Common myeloid progenitor, CD34-positive (primary cell): ENCODE measurements at regions of chr6 and their contacts with region 1.

Region 1: DNA sequence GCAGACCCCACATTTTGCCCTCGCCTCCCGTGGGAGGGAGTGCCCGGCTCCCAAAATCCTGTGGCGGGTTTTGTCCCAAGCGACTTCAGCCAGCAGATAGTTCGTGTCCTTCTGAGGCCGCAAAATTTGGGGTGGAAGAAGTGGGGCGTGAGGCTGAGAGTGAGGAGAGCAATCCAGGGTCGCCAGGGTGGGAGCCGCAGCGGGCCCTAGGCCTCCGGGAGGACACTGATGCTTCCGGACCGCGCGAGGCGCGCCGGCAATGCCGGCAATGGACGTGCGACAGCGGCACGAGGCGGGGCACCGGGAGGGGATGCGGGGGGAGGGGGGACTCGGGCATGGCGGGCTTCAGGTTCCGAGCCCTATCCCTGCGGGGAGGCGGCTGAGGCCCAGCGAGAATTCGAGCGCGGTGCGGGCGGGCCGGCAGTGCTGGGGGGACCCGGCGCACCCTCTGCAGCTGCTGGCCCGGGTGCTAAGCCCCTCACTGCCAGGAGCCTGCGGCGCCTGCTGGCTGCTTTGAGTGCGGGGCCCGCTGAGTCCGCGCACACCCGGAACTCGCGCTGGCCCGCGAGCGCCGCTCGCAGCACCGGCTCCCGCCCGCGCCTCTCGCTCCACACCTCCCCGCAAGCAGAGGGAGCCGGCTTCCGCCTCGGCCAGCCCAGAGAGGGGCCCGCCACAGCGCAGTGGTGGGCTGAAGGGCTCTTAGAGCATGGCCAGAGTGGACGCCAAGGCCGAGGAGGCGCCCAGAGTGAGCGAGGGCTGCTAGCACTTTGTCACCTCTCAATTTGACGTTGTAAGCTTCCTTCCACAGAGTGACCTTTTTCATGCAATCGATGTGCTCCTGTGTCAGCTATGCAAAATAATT is 143.8 kb downstream of the LPA start:
- DNase-seq: peak; percentile 45 to 77 (median 65)
- H3K4me3 ChIP-seq: peak overlapping the region; percentile 37 to 83 (median 65)
- H3K27ac ChIP-seq: no peak overlapping the region
- H3K4me1 ChIP-seq: peaks cover 0 to 12% (median 10%) of the 10 kb centered on the region in 4 experiments
- H3K27me3 ChIP-seq: peaks cover 0 to 26% (median 6%) of the 10 kb centered on the region in 5 experiments

Region 2: DNA sequence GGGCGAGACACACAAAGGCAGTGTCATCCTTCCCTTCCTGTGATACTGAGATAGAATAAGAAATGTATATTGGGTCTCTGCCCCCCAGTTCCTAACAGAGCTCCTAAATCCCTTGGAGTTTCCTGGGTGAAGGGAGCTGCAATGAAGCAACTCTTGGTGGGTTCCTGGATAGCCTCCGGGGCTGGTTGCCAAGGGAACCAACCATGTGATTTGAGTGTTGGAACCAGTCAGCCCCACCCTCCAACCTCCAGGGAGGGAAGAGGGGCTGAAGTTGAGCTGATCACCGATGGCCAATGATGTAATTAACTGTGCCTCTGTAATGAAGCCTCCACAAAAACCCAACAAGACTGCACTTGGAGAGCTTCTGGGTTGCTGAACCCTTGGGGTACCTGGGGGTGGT is 55.5 kb before region 1 on chr6:
- CTCF ChIA-PET with region 1: no interaction called
- POLR2A ChIA-PET with region 1: no interaction called
- DNase-seq: no peak
- H3K4me3 ChIP-seq: no peak overlapping the region
- H3K27ac ChIP-seq: no peak overlapping the region
- H3K4me1 ChIP-seq: peaks cover 15 to 41% (median 30%) of the 10 kb centered on the region in 4 experiments
- H3K27me3 ChIP-seq: peaks cover 5 to 75% (median 23%) of the 10 kb centered on the region in 5 experiments

Region 3: GRCh38 chr6:160510199-160510598 is 10.1 kb before region 1 on chr6:
- CTCF ChIA-PET with region 1: interaction called, 16 read pairs
- POLR2A ChIA-PET with region 1: no interaction called
- DNase-seq: peak in 2 of 3 donors; percentile 22 to 34
- H3K4me3 ChIP-seq: no peak overlapping the region
- H3K27ac ChIP-seq: no peak overlapping the region
- H3K4me1 ChIP-seq: no peaks in the 10 kb centered on the region
- H3K27me3 ChIP-seq: peaks cover 0 to 13% (median 0%) of the 10 kb centered on the region in 5 experiments

Region 4: DNA sequence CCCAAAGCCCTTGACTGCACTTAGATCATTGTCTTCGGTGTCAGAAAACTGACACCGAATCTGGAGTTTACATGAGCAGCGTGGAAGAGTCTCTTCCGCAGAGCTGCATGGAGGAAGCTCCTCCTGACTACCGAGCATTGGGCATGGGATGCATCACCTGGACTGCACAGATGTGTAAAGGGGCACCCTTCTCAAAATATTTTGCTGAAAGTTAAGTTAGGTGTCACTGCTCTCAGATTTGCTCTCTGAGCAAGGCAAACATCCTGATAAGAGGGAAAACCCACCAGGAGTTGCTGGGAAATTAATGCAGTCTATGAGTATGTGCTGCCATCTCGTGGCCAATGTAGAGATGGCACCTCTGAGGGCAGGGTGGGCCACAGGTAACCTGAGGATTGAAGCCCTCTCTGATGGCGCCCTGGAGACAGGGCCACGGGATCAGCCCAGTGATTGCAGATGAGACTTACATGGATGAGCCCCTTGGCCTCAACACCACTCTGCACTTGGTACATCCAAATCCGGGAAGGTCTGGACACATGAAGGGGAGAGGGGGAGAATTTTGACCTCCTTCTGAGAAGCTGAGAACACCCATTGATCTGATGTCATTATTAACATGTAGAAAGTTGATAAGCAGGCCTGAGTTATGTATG is 13.9 kb after region 1 on chr6:
- CTCF ChIA-PET with region 1: interaction called, 34 read pairs
- POLR2A ChIA-PET with region 1: no interaction called
- DNase-seq: peak; percentile 18 to 51 (median 28)
- H3K4me3 ChIP-seq: no peak overlapping the region
- H3K27ac ChIP-seq: no peak overlapping the region
- H3K4me1 ChIP-seq: peaks cover 0 to 4% (median 0%) of the 10 kb centered on the region in 4 experiments
- H3K27me3 ChIP-seq: peaks cover 2 to 32% (median 6%) of the 10 kb centered on the region in 5 experiments

Region 5: DNA sequence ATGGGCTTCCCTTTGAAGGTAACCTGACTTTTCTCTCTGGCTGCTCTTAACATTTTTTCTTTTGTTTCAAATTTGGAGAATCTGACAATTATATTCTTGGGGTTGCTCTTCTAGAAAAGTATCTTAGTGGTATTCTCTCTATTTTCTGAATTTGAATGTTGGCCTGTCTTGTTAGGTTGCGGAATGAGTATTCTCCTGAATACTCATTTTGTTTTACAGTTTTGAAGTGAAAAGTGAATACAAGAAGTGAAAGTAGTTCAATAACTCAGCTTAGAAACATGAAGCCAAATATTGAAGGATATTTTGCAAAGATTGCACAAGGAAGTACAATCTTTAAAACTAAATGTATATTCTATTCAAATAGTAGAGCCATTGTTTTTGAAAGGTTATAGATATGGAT is 351.0 kb after region 1 on chr6:
- CTCF ChIA-PET with region 1: no interaction called
- POLR2A ChIA-PET with region 1: no interaction called
- DNase-seq: no peak
- H3K4me3 ChIP-seq: no peak overlapping the region
- H3K27ac ChIP-seq: no peak overlapping the region
- H3K4me1 ChIP-seq: no peaks in the 10 kb centered on the region
- H3K27me3 ChIP-seq: no peaks in the 10 kb centered on the region

Region 6: DNA sequence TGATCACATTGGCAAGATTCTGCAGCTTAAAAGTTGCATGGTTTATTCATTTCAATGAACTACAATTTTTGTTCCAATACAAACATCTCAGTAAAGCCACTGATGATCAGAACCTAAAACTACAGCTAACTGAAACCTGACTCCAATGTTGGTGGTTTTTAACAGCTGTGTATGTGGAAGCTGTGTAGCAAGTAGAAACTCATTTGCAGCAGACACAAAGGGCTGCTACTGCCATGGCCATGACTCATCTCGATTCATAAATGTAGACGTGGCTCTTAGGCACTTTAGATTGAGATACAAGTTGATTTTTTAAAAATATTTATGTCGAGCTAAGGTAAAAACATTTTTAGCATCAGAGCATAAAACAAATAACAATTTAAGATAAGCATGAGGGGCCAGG is 451.8 kb after region 1 on chr6:
- CTCF ChIA-PET with region 1: no interaction called
- POLR2A ChIA-PET with region 1: no interaction called
- DNase-seq: no peak
- H3K4me3 ChIP-seq: no peak overlapping the region
- H3K27ac ChIP-seq: no peak overlapping the region
- H3K4me1 ChIP-seq: no peaks in the 10 kb centered on the region
- H3K27me3 ChIP-seq: peaks cover 0 to 2% (median 0%) of the 10 kb centered on the region in 5 experiments